B cell (primary cell): ENCODE measurements at regions of chr17 and their contacts with region 1.

Region 1: GRCh38 chr17:45317112-45317928 is 500 bp upstream of the MAP3K14 start:
- DNase-seq: peak; percentile 100
- ATAC-seq: peak; percentile 80
- H3K4me3 ChIP-seq: peak overlapping the region; percentile 32 to 90 (median 62)
- H3K4me3 Mint-ChIP-seq: peak overlapping the region; percentile 92
- H3K27ac ChIP-seq: peak overlapping the region; percentile 47 to 93
- H3K27ac Mint-ChIP-seq: peak overlapping the region; percentile 95
- H3K4me1 ChIP-seq: peaks cover 39 to 41% of the 10 kb centered on the region in 2 donors
- H3K4me1 Mint-ChIP-seq: peaks cover 48% of the 10 kb centered on the region
- H3K27me3 ChIP-seq: no peaks in the 10 kb centered on the region
- H3K27me3 Mint-ChIP-seq: no peaks in the 10 kb centered on the region
- CTCF ChIP-seq: no peak

Region 2: DNA sequence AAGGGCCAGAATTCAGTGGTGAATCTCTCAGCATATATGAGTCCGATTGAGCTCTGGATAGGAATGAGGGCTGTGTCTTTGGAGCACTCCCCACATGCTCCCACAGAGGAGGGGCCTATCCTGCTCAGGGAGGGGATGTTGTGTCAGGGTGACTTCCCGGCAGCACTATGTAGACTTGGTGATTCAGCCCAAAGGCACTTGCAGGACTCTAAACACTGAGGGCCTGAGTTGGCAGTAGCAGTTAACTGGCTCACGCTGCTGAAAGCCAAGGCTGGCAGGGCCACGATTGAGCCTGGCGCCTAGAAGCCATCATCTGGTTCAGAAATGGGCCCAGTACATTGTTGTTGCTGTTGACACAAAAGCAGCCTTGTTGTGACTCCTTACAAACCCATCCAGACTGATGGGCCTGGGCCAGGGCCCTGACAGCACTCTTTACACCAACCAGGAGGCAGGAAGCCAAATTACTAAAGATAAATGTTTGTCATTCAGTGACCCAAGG is 224.3 kb before region 1 on chr17:
- CTCF ChIA-PET with region 1: no interaction called
- POLR2A ChIA-PET with region 1: no interaction called
- intact Hi-C with region 1: no loop called
- DNase-seq: no peak
- ATAC-seq: no peak
- H3K4me3 ChIP-seq: no peak overlapping the region
- H3K4me3 Mint-ChIP-seq: no peak overlapping the region
- H3K27ac ChIP-seq: no peak overlapping the region
- H3K27ac Mint-ChIP-seq: no peak overlapping the region
- H3K4me1 ChIP-seq: no peaks in the 10 kb centered on the region
- H3K4me1 Mint-ChIP-seq: peaks cover 2% of the 10 kb centered on the region
- H3K27me3 ChIP-seq: no peaks in the 10 kb centered on the region
- H3K27me3 Mint-ChIP-seq: no peaks in the 10 kb centered on the region
- CTCF ChIP-seq: no peak

Region 3: DNA sequence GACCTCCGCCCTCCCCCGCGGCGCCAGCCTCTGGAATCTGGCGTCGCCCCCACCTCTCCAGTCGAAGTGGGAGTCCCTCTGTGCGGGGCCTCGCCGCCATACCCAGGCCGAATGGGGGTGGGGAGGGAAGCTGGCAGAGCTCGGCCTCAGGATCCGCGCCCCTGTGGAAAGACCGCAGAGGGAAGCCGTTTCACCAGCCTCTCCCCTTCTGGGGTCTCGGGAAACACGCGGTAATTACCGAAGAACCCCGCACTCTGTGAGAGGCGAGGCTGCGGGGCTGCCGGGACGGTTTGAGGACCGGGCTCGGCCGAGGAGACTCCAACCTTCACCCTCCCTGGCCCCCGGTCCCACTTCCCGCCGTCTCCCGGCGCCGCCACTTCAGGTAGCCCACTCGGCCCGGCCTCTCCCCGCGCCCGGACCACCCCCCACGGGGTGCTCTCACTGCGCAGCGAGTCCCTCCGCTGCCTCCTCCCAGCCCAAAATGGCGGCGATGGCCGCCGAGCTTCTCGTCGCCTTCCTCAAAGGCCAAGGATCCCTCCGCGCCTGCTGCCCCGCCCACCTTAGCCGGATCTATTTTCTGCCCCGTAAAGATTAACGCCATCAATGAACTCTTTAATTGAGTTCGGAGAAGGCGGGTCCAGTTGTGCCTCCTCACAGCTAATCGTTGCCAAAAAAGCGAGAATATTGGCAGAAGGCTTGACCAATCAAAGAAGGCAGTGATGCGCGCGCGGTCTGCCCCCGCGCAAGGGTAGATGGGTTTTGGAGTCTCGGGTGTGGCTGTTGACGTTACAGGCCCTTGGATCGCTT is 156.1 kb before region 1 on chr17:
- CTCF ChIA-PET with region 1: no interaction called
- POLR2A ChIA-PET with region 1: interaction called, 6 read pairs
- intact Hi-C with region 1: loop called (anchors 1 kb)
- DNase-seq: peak; percentile 100
- ATAC-seq: peak; percentile 93
- H3K4me3 ChIP-seq: peak overlapping the region; percentile 64 to 98 (median 92)
- H3K4me3 Mint-ChIP-seq: peak overlapping the region; percentile 95
- H3K27ac ChIP-seq: peak overlapping the region; percentile 98
- H3K27ac Mint-ChIP-seq: peak overlapping the region; percentile 97
- H3K4me1 ChIP-seq: peaks cover 19 to 28% of the 10 kb centered on the region in 2 donors
- H3K4me1 Mint-ChIP-seq: peaks cover 37% of the 10 kb centered on the region
- H3K27me3 ChIP-seq: no peaks in the 10 kb centered on the region
- H3K27me3 Mint-ChIP-seq: no peaks in the 10 kb centered on the region
- CTCF ChIP-seq: no peak

Region 4: DNA sequence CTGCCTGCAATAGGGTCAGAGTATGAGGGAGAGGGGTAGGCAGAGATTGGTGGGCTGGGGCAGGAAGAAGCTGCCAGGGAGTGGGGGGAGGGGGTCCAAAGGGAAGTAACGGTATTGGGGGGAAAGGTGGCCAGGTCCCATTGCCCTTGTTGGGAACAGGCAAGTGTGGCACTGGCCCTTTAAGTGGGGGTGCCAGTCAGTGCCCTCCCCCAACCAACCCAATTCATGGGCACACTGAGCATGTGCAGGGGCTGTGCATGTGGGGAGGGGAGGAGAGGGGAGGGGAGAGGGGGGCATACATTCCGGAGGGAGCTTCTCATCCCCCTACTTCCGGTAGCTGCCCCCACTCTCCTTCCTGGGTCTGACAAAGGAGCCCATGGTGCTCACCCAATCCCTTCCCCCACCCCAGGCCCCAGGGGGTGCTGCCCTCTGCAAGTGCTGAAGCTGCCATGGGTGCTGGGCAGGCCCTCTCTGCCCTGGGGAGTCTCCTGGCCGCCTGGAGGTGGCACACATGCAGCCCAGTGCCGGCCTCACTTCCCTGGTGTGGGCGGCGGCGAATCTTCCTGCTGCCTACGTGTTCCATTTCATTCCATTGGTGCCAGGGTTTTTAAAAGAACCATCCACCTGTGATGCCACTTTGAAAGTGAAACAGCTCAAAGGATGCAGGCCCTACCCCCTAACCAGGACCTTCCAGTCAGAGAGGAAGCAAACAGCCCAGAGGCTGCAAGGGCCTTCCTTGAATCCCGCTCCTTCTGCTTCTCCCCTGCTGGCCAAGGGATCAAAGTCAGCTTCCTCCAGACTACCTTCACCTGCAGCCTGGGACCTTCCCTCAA is 144.7 kb before region 1 on chr17:
- CTCF ChIA-PET with region 1: no interaction called
- POLR2A ChIA-PET with region 1: no interaction called
- intact Hi-C with region 1: no loop called
- DNase-seq: peak; percentile 59
- ATAC-seq: peak; percentile 85
- H3K4me3 ChIP-seq: peak overlapping the region in 4 of 5 experiments; percentile 31 to 51 (median 49)
- H3K4me3 Mint-ChIP-seq: peak overlapping the region; percentile 86
- H3K27ac ChIP-seq: peak overlapping the region; percentile 40 to 63
- H3K27ac Mint-ChIP-seq: peak overlapping the region; percentile 97
- H3K4me1 ChIP-seq: peaks cover 11 to 16% of the 10 kb centered on the region in 2 donors
- H3K4me1 Mint-ChIP-seq: peaks cover 12% of the 10 kb centered on the region
- H3K27me3 ChIP-seq: no peaks in the 10 kb centered on the region
- H3K27me3 Mint-ChIP-seq: no peaks in the 10 kb centered on the region
- CTCF ChIP-seq: no peak

Region 5: DNA sequence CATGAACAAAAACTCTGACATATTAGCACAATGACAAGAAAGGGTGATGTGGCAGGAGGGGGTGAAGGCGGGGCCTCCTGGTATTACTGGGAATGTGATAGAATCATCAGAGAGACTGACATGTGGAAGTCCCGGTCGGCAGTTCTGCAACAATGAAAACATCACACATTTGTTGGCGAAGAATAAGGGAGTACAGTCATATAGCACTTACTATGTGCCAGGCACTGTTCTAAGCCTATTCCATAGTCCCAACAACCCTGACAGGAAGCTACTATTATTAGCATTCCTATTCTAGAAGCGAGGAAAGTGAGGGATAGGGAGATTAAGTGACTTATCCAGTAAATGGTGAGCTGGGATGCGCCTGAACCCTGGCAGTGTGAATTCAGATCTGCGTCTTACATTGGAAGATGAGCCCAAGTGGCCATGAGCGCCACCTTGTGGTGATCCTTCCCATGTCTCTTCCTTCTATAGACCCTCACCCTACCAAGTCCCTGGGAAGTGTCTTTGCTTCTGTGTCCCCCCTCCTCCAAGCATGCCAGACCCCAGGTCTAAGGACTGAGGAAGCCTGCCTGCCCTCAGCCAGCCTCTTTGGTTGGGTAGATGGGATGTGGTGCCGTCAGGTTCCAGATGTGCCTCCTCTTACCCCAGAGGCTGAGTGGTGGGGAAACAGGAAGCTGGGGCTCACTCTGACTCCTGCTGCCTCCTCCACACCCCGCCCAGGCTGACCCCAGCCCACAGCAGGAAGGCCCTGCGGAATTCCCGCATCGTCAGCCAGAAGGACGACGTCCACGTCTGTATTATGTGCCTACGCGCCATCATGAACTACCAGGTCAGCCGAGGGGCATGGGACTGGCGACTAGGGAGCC is 81.7 kb before region 1 on chr17:
- CTCF ChIA-PET with region 1: interaction called, 13 read pairs
- POLR2A ChIA-PET with region 1: no interaction called
- intact Hi-C with region 1: no loop called
- DNase-seq: peak; percentile 87
- ATAC-seq: peak; percentile 56
- H3K4me3 ChIP-seq: no peak overlapping the region
- H3K4me3 Mint-ChIP-seq: no peak overlapping the region
- H3K27ac ChIP-seq: peak overlapping the region; percentile 0 to 43
- H3K27ac Mint-ChIP-seq: peak overlapping the region; percentile 82
- H3K4me1 ChIP-seq: peaks cover 18 to 45% of the 10 kb centered on the region in 2 donors
- H3K4me1 Mint-ChIP-seq: peaks cover 47% of the 10 kb centered on the region
- H3K27me3 ChIP-seq: no peaks in the 10 kb centered on the region
- H3K27me3 Mint-ChIP-seq: no peaks in the 10 kb centered on the region
- CTCF ChIP-seq: peak; percentile 83

Region 6: DNA sequence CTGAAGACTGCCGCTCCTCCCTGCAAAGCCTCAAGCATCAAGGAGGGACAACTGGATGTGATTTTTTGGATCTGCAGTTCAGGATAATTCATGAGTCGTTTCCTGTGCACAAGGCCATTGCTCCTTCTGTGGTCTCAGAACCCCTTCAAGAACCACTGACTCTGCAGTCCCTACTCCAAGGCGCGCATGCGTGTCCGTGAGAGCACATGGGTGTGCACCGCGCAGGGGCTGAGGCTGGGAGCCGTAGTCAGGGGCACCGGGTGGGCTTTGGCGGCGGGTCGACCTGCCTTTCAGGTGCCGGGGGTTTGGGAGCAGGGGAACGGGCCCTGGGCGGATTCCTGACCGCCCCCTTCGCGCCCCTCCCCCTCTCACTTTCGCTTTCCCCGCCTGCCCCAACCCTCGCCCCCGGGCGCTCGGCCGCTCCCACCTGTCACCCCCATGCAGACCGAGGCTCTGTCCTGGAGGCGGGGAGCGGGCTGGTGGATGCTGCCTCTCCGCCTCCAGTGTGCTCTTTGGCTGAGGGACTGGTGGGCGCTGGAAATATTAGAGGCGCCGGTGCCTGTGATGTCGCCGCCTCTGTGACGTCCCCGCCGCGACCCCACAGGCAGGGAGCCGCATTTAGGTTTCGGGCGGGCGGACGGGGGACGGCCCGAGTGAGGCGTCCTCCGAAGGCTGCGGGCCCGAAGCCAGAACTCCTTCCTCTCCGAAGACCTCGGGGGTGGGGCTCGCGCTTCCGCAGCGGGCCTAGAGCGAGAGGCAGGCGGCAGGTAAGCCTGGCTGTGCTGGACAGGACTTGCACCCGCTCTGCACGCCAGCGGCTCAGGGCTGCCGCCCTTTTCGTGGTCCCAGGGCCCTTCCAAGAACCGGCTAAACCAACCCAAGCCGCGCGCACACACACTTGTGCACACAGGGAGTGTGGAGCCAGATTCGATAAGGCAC is 55.5 kb before region 1 on chr17 and contains the start of gene SPATA32:
- CTCF ChIA-PET with region 1: no interaction called
- POLR2A ChIA-PET with region 1: no interaction called
- intact Hi-C with region 1: no loop called
- DNase-seq: peak; percentile 68
- ATAC-seq: peak; percentile 71
- H3K4me3 ChIP-seq: peak within 1 kb of the TSS; percentile 19 to 81 (median 73)
- H3K4me3 Mint-ChIP-seq: peak within 1 kb of the TSS; percentile 87
- H3K27ac ChIP-seq: peak within 1 kb of the TSS; percentile 51 to 62
- H3K27ac Mint-ChIP-seq: peak within 1 kb of the TSS; percentile 78
- H3K4me1 ChIP-seq: peaks cover 5 to 18% of the 10 kb centered on the region in 2 donors
- H3K4me1 Mint-ChIP-seq: peaks cover 16% of the 10 kb centered on the region
- H3K27me3 ChIP-seq: no peaks in the 10 kb centered on the region
- H3K27me3 Mint-ChIP-seq: no peaks in the 10 kb centered on the region
- CTCF ChIP-seq: no peak
- total RNA-seq, gene SPATA32: 0.27 and 0.52 TPM in 2 replicates

Region 7: DNA sequence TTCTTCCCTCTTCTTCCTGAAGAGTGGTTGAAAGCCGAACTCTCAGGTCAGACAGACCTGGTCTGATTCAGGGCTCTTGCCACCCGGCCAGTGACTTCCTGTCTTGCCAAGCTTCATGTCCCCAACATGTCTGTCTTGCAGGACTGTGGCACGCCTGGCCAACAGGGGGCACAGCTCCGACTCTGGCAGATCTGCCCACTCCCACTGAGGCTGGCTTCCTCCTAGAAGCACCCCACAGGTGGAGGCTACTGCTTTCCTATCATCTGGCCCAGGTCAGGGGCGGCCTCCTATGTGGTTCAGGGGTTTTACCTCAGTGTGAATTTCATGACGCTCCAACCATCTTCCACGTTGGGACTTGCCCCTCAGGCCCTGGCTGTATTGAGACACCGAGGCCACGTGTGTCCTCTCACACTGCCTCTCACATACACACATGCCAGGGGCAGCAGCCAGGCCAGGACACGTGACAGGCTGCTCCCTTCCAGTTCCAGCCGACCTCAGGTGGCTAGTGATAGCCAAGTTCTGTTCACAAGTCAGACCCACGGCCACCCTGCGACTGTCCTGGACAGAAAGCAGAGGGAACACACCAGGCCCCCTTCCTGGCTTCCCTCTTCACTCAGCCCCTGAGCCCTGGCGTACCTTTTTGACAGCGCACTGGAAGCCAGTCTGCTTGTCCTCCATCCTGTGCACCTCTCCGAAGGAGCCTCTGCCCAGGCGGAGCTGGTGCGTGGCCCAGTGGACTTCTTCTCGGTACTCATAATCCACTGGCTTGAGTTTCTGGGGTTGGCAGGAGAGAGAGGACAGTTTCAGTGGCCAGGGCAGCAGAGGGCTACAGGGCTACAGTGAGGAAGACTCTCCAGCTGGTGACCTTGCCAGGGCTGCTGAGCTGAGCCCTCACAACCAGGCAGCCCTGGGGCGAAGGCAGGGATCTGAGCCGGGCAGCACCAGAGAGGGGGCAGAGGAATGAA is 32.9 kb before region 1 on chr17:
- CTCF ChIA-PET with region 1: interaction called, 207 read pairs
- POLR2A ChIA-PET with region 1: interaction called, 8 read pairs
- intact Hi-C with region 1: no loop called
- DNase-seq: peak; percentile 50
- ATAC-seq: peak; percentile 65
- H3K4me3 ChIP-seq: no peak overlapping the region
- H3K4me3 Mint-ChIP-seq: no peak overlapping the region
- H3K27ac ChIP-seq: peak overlapping the region in 1 of 2 donors; percentile 35
- H3K27ac Mint-ChIP-seq: peak overlapping the region; percentile 61
- H3K4me1 ChIP-seq: peaks cover 0 to 8% of the 10 kb centered on the region in 2 donors
- H3K4me1 Mint-ChIP-seq: peaks cover 4% of the 10 kb centered on the region
- H3K27me3 ChIP-seq: no peaks in the 10 kb centered on the region
- H3K27me3 Mint-ChIP-seq: no peaks in the 10 kb centered on the region
- CTCF ChIP-seq: peak; percentile 33

Region 8: DNA sequence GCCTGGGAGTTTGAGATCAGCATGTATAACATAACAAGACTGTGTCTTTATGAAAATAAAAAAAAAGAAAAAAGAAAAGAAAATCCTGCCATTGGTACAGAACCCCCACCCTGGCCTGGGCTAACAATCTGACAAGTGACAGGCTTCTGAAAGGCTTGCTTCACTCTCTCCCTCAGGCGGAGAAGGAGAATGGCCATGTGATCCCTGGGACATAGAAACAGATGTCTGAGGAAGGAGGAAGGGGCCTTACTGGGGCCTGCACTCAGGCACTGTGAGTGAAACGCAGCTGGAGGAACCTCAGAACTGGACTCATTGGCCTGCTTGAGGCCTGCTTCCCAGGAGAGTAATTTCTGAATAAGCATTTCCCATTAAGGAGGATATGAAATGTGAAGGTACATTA is 18.0 kb before region 1 on chr17:
- CTCF ChIA-PET with region 1: interaction called, 38 read pairs
- POLR2A ChIA-PET with region 1: interaction called, 25 read pairs
- intact Hi-C with region 1: loop called (anchors 1 kb)
- DNase-seq: no peak
- ATAC-seq: no peak
- H3K4me3 ChIP-seq: no peak overlapping the region
- H3K4me3 Mint-ChIP-seq: peak overlapping the region; percentile 48
- H3K27ac ChIP-seq: peak overlapping the region in 1 of 2 donors; percentile 25
- H3K27ac Mint-ChIP-seq: peak overlapping the region; percentile 88
- H3K4me1 ChIP-seq: peaks cover 93 to 95% of the 10 kb centered on the region in 2 donors
- H3K4me1 Mint-ChIP-seq: peaks cover 88% of the 10 kb centered on the region
- H3K27me3 ChIP-seq: no peaks in the 10 kb centered on the region
- H3K27me3 Mint-ChIP-seq: no peaks in the 10 kb centered on the region
- CTCF ChIP-seq: no peak

Region 9: GRCh38 chr17:45410144-45411091 is 93.1 kb after region 1 on chr17:
- CTCF ChIA-PET with region 1: interaction called, 3 read pairs
- POLR2A ChIA-PET with region 1: no interaction called
- intact Hi-C with region 1: loop called (anchors 5 kb)
- DNase-seq: peak; percentile 80
- ATAC-seq: peak; percentile 63
- H3K4me3 ChIP-seq: peak overlapping the region; percentile 78 to 97 (median 86)
- H3K4me3 Mint-ChIP-seq: peak overlapping the region; percentile 100
- H3K27ac ChIP-seq: peak overlapping the region; percentile 74 to 89
- H3K27ac Mint-ChIP-seq: peak overlapping the region; percentile 99
- H3K4me1 ChIP-seq: peaks cover 82 to 93% of the 10 kb centered on the region in 2 donors
- H3K4me1 Mint-ChIP-seq: peaks cover 83% of the 10 kb centered on the region
- H3K27me3 ChIP-seq: no peaks in the 10 kb centered on the region
- H3K27me3 Mint-ChIP-seq: no peaks in the 10 kb centered on the region
- CTCF ChIP-seq: no peak